Right cardiac atrium (tissue), 5 donors: ENCODE measurements at regions of chr15 and their contacts with region 1.

Region 1: DNA sequence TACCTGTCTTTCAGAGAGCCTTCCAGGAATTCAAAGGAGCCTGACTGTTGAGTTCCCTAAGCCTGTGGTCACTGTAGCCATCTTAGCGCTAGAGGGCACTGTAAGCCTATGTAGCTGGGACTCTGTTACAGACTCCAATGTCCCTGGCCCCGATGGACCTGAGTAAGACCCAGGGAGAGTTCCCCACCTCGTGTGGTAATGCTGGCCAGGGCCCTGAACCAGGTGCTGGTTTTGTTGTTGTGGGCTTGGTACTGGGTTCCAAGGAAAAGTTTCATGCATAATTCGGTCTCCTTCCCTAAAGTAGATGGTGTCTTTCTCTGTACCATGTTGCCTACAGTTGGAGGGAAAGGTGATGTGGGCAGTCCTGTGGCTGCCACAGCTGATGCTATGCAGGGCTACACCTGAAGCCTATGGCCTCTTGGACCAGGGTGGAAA is 32.4 kb downstream of the CDAN1 start:
- DNase-seq: peak in 2 of 3 donors; percentile 51 to 72
- ATAC-seq: peak; percentile 94 to 95
- H3K4me3 ChIP-seq: no peak overlapping the region
- H3K27ac ChIP-seq: no peak overlapping the region
- H3K4me1 ChIP-seq: no peaks in the 10 kb centered on the region
- H3K27me3 ChIP-seq: no peaks in the 10 kb centered on the region

Region 2: GRCh38 chr15:42920519-42921227 is 216.2 kb after region 1 on chr15 and contains the start of gene TTBK2:
- intact Hi-C with region 1: loop called (anchors 5 to 10 kb)
- DNase-seq: peak; percentile 98 to 99 (median 99)
- ATAC-seq: peak; percentile 99 to 100
- H3K4me3 ChIP-seq: peak within 1 kb of the TSS; percentile 92
- H3K27ac ChIP-seq: peak within 1 kb of the TSS; percentile 87
- H3K4me1 ChIP-seq: no peaks in the 10 kb centered on the region
- H3K27me3 ChIP-seq: no peaks in the 10 kb centered on the region
- total RNA-seq, gene TTBK2: 26.7 to 38.6 (median 31.7) TPM

Region 3: DNA sequence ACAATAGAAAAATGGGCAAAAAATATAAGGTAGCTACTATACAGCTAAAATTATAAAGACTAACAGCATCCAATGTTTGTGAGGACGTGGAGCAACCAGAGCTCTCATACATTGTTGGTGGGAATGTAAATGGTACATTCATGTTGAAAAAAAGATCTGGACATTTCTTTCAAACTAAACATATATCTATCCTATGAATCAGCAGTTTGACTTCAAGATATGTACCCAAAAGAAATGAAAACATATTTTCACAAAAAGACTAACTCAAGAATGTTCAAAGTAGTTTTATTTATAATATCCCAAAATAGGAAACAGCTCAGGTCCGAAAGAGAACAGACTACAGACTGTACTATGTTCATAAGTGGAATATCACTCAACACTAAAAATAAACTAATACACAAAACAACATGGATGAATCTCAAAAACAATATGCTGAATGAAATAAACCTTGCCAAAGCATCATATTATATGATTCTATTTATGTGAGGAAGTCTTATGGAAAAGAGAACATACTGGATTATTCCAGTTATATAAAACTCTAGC is 224.9 kb after region 1 on chr15:
- intact Hi-C with region 1: loop called (anchors 5 to 10 kb)
- DNase-seq: no peak
- ATAC-seq: no peak
- H3K4me3 ChIP-seq: no peak overlapping the region
- H3K27ac ChIP-seq: no peak overlapping the region
- H3K4me1 ChIP-seq: no peaks in the 10 kb centered on the region
- H3K27me3 ChIP-seq: no peaks in the 10 kb centered on the region